CD4-positive, alpha-beta T cell (primary cell): ENCODE measurements at regions of chr1 and their contacts with region 1.

Region 1: DNA sequence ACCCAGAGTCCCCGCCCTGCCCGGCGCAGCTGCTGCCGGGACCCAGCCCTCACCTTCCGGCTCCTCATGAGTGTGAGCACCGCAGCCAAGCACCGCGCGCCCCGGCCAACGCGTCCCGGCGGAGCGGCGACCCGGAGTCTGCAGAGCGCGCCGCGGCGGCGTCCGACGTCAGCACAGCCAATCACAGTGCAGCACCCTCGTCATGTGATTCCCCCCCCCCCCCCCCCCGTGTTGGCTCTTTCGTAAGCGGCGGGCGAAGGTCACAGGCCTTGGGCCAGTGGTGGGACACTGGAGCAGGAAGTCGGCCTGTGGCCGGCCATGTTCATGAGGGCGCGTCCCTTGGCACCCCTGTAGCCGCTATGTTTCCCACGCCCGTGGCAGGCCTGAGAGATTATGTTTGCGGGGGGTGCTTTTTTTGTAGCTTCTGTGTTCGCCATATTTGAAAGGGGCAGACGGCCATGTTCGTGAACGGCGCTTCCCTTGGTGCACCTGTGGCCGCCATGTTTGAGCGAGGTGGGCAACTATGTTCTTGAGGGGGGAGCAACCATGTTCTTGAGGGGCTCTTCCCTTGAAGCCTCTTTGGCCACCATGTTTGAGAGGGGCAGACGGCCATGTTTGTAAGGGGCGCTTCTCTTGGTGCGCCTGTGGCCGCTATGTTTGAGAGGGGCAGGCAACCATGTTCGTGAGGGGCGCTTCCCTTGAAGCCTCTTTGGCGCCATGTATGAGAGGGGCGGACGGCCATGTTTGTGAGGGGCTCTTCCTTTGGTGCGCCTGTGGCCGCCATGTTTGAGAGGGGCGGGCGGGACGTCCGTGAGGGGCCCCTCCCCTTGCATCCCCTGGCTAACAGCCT is at the start of gene C1orf174:
- DNase-seq: peak; percentile 87 to 99 (median 92)
- ATAC-seq: peak; percentile 83
- H3K4me3 ChIP-seq: peak within 1 kb of the TSS; percentile 85
- H3K4me3 Mint-ChIP-seq: peak within 1 kb of the TSS; percentile 93
- H3K27ac ChIP-seq: peak within 1 kb of the TSS; percentile 81 to 96
- H3K27ac Mint-ChIP-seq: peak within 1 kb of the TSS; percentile 90
- H3K4me1 ChIP-seq: peaks cover 47% of the 10 kb centered on the region
- H3K4me1 Mint-ChIP-seq: peaks cover 69% of the 10 kb centered on the region
- H3K27me3 ChIP-seq: no peaks in the 10 kb centered on the region
- H3K27me3 Mint-ChIP-seq: no peaks in the 10 kb centered on the region
- CTCF ChIP-seq: no peak
- total RNA-seq, gene C1orf174: 16.8 to 18.5 TPM

Region 2: DNA sequence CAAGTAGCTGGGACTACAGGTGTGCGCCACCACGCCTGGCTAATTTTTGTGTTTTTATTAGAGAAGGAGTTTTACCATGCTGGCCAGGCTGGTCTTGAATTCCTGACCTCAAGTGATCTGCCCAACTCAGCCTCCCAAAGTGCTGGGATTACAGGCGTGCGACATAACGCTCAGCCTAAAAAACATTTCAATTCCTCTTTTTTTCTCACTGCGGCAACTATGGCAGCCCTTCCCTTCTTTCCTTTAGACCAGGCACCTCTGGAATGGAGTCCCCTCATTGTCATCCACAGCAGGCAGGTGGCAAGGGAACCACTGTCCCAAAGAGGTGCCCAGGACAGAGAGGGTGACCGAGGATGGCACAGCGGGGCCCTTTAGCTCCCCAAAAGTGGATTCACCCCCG is 57.4 kb before region 1 on chr1:
- CTCF ChIA-PET with region 1: no interaction called
- POLR2A ChIA-PET with region 1: no interaction called
- intact Hi-C with region 1: no loop called
- DNase-seq: no peak
- ATAC-seq: no peak
- H3K4me3 ChIP-seq: no peak overlapping the region
- H3K4me3 Mint-ChIP-seq: no peak overlapping the region
- H3K27ac ChIP-seq: no peak overlapping the region
- H3K27ac Mint-ChIP-seq: no peak overlapping the region
- H3K4me1 ChIP-seq: no peaks in the 10 kb centered on the region
- H3K4me1 Mint-ChIP-seq: no peaks in the 10 kb centered on the region
- H3K27me3 ChIP-seq: no peaks in the 10 kb centered on the region
- H3K27me3 Mint-ChIP-seq: no peaks in the 10 kb centered on the region
- CTCF ChIP-seq: no peak

Region 3: GRCh38 chr1:3856908-3857790 is 43.2 kb before region 1 on chr1 and contains the starts of genes CEP104 and DFFB:
- CTCF ChIA-PET with region 1: interaction called, 8 read pairs
- POLR2A ChIA-PET with region 1: interaction called, 15 read pairs
- intact Hi-C with region 1: loop called (anchors 1 kb)
- DNase-seq: peak; percentile 93 to 99 (median 98)
- ATAC-seq: peak; percentile 98
- H3K4me3 ChIP-seq: peak within 1 kb of the TSS; percentile 87
- H3K4me3 Mint-ChIP-seq: peak within 1 kb of the TSS; percentile 100
- H3K27ac ChIP-seq: peak within 1 kb of the TSS; percentile 49 to 54
- H3K27ac Mint-ChIP-seq: peak within 1 kb of the TSS; percentile 87
- H3K4me1 ChIP-seq: peaks cover 40% of the 10 kb centered on the region
- H3K4me1 Mint-ChIP-seq: peaks cover 43% of the 10 kb centered on the region
- H3K27me3 ChIP-seq: no peaks in the 10 kb centered on the region
- H3K27me3 Mint-ChIP-seq: no peaks in the 10 kb centered on the region
- CTCF ChIP-seq: peak; percentile 54
- total RNA-seq, gene CEP104: 16.6 to 20.5 TPM
- total RNA-seq, gene DFFB: 6.7 to 6.8 TPM